ENCODE measurements at regions of chr2 and their contacts with region 1.

Region 1: GRCh38 chr2:192471982-192472381 is 277.2 kb upstream of the TMEFF2 start:
- DNase-seq: no peak

Region 2: DNA sequence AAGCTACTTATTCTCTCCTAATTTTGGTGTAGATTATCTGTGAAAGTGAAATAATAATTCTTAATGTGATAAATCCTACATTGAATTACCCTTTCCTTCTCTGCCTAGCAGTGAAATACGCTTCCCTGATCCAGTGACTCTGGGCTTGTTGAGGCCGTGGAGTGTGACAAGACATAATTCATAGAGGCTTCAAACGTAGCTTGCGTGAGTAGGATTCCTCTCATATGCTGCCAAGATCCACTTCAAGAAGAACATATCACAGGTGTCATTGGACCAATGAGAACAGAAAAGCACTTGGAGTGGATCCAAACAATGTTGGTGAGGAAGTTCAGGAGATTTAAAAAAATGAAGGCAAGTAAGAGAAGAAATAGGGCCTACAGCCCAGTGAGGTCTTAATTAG is 55.9 kb before region 1 on chr2:
- intact Hi-C with region 1: no loop called
- DNase-seq: no peak

Region 3: DNA sequence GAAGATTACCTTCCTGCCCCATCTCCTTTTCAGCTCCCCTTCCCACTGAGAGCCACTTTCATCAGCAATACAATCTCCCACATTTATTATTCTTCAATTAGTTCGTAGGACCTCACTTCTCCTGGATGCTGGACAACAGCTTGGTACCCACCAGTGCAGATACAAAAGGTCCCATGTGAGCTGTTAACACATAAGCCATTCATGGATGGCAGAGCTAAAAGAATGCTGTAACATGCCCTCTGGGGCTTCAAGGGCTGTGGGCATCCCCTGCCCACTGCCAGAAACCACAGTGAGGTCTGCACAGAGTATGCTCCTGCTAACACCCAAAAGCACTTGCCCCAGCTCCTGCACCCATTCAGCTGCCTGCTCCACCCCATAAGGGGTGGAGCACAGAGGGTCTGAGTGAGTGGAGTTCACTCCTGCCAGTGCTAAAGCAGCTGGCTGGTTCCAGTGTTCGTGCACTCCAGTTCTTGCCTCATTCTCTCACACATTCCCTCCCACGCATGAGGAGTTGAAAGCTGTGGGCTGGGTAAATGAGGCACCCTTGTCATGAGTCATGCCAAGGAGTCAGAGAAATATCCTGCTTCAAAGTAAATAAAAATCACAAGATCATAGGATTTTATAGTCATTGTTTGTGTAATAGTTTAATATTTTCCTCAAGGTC is 28.7 kb after region 1 on chr2:
- intact Hi-C with region 1: loop called in 1 of 2 experiments (anchors 1 kb)
- DNase-seq: no peak